ENCODE measurements at regions of chr19 and their contacts with region 1.

Region 1: GRCh38 chr19:41133260-41133659 is 19.0 kb downstream of the CYP2F1 start:
- DNase-seq: no peak
- H3K4me3 ChIP-seq: no peak overlapping the region
- CTCF ChIP-seq: no peak
- POLR2A ChIP-seq: no peak

Region 2: GRCh38 chr19:40806488-40807468 is 326.5 kb before region 1 on chr19:
- intact Hi-C with region 1: loop called (anchors 5 kb)
- DNase-seq: peak; percentile 87 to 96
- H3K4me3 ChIP-seq: no peak overlapping the region
- CTCF ChIP-seq: peak in 1 of 3 donors; percentile 46
- POLR2A ChIP-seq: no peak

Region 3: GRCh38 chr19:41248895-41249294 is 115.6 kb after region 1 on chr19:
- intact Hi-C with region 1: no loop called
- DNase-seq: peak in 1 of 2 donors; percentile 46
- H3K4me3 ChIP-seq: no peak overlapping the region
- CTCF ChIP-seq: no peak
- POLR2A ChIP-seq: no peak